ENCODE measurements at regions of chr10 and their contacts with region 1.

Region 1: DNA sequence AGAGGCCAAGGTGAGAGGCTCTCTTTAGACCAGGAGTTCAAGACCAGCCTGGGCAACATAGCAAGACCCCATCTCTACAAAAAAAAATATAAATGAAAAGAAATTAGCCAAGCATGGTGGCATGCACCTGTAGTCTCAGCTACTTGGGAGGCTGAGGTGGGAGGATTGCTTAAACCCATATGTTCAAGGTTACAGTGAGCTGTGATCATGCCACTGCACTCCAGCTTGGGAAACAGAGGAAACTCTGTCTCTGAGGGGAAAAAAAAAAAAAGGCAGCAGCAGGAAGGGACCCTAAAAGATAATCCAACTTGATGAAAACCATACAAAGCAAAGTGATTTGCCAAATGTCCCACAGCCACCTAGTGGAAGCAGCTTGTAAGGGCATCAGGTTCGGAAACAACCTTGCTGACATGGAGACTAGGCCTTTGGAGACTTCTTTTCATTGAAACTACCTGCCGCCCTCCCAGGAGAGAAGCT is 15.6 kb upstream of the PBLD start:
- DNase-seq: peak; percentile 56
- H3K27ac ChIP-seq: no peak overlapping the region
- CTCF ChIP-seq: peak; percentile 74

Region 2: GRCh38 chr10:68362590-68362989 is 14.3 kb after region 1 on chr10:
- CTCF ChIA-PET with region 1: interaction called, 10 read pairs
- POLR2A ChIA-PET with region 1: no interaction called
- DNase-seq: no peak
- H3K27ac ChIP-seq: no peak overlapping the region
- CTCF ChIP-seq: no peak

Region 3: GRCh38 chr10:68406815-68407548 is 58.7 kb after region 1 on chr10 and contains the start of gene RUFY2:
- CTCF ChIA-PET with region 1: interaction called, 11 read pairs
- POLR2A ChIA-PET with region 1: no interaction called
- DNase-seq: peak; percentile 83
- H3K27ac ChIP-seq: peak within 1 kb of the TSS; percentile 84
- CTCF ChIP-seq: peak; percentile 96

Region 4: DNA sequence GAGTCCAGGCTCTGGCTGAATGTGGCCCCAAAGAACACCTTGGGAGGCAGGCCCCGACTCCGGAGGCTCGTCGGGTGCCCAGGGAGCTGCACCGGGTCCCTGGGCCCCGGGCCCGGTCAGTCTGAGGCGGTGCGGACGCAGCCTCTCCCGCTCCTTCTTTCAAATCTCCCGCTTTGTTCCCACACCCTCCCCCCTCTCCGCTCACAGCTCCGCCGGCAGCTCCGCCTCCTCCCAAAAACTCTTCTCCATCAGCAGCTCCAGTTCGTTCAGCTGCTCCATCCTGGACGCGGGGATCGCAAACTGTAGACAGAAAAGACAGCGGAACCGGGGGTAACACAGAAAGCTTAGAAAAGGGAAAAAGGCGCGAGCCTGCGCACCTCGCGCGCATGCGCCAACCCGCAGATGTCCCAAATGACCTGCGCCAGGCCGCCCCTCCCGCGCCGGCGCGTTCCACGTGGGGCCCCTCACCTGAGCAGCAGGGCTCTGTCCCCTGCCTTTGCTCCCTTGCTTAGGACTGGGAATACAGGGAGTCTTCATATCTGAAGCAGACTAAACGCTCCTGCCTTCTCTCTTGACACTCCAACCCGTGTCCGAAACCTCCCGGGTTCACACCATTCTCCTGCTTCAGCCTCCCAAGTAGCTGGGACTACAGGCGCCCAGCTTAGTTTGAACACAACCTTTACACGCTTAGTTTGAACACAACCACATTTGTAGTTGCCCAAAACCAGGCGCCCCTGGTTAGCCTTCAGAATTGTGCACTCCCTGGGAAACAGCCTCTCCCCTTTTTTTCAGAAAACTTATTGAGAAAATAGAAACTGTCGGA is 123.5 kb after region 1 on chr10 and contains the start of gene DNA2:
- CTCF ChIA-PET with region 1: no interaction called
- POLR2A ChIA-PET with region 1: no interaction called
- DNase-seq: peak; percentile 95
- H3K27ac ChIP-seq: peak within 1 kb of the TSS; percentile 97
- CTCF ChIP-seq: no peak

Measured in RWPE1 (cell line).